ENCODE measurements at regions of chrX and their contacts with region 1.

Region 1: GRCh38 chrX:7147978-7148824 is at the start of gene PUDP:
- DNase-seq: peak; percentile 80
- H3K4me3 Mint-ChIP-seq: peak within 1 kb of the TSS; percentile 86
- H3K27ac Mint-ChIP-seq: peak within 1 kb of the TSS; percentile 82
- H3K4me1 Mint-ChIP-seq: no peaks in the 10 kb centered on the region
- H3K27me3 Mint-ChIP-seq: no peaks in the 10 kb centered on the region
- total RNA-seq, gene PUDP: 20.1 and 23.4 TPM in 2 replicates

Region 2: GRCh38 chrX:7059214-7059838 is 88.9 kb before region 1 on chrX:
- intact Hi-C with region 1: loop called (anchors 1 kb)
- DNase-seq: no peak
- H3K4me3 Mint-ChIP-seq: peak overlapping the region; percentile 26
- H3K27ac Mint-ChIP-seq: peak overlapping the region; percentile 55
- H3K4me1 Mint-ChIP-seq: peaks cover 23% of the 10 kb centered on the region
- H3K27me3 Mint-ChIP-seq: no peaks in the 10 kb centered on the region

Region 3: GRCh38 chrX:7083468-7084396 is 64.5 kb before region 1 on chrX:
- intact Hi-C with region 1: loop called (anchors 1 kb)
- DNase-seq: peak; percentile 63
- H3K4me3 Mint-ChIP-seq: peak overlapping the region; percentile 63
- H3K27ac Mint-ChIP-seq: peak overlapping the region; percentile 88
- H3K4me1 Mint-ChIP-seq: peaks cover 46% of the 10 kb centered on the region
- H3K27me3 Mint-ChIP-seq: no peaks in the 10 kb centered on the region